Caco-2 (cell line): ENCODE measurements at regions of chr1 and their contacts with region 1.

Region 1: DNA sequence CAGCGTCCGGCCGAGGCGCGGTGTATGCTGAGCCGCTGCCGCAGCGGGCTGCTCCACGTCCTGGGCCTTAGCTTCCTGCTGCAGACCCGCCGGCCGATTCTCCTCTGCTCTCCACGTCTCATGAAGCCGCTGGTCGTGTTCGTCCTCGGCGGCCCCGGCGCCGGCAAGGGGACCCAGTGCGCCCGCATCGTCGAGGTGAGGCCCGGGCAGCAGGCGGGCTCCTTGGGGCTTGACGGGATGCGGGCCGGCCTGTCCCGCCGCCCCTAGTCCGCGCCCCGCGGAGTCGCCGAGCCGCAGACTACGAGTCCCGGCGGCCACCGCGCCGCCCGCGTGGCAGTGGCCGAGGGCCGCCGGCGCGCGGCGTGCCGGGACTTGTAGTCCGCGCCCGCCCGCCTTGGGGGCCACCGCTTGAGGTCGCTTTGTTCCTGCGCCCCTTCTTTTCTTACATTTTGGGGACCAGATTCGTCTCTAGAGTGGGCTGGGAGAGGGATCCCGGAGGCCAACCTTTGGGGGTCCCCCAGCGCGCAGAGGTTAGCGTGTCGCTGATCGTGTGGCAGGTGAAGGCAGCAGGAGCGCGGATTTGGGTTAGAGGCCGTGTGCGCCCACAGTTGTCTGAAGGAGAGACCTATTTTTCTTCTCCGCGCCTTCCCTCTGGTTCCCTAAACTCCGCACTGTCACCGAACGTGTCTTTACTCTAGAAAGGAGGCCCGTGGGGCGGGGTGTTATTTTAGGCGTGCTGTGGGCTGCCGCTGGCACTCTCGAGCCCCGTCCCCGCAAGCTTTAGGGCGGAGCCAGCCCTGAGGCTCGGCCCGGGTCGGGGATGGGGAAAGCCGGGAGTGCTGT is 553 bp downstream of the CMPK1 start:
- DNase-seq: peak; percentile 83
- H3K4me3 ChIP-seq: peak overlapping the region; percentile 85
- H3K4me3 Mint-ChIP-seq: no peak overlapping the region
- H3K27ac Mint-ChIP-seq: peak overlapping the region; percentile 93
- H3K4me1 ChIP-seq: no peaks in the 10 kb centered on the region; the same call in 1 of the 2 replicates
- H3K4me1 Mint-ChIP-seq: peaks cover 7% of the 10 kb centered on the region
- H3K27me3 ChIP-seq: no peaks in the 10 kb centered on the region
- H3K27me3 Mint-ChIP-seq: no peaks in the 10 kb centered on the region
- CTCF ChIP-seq: peak; percentile 12 to 28

Region 2: DNA sequence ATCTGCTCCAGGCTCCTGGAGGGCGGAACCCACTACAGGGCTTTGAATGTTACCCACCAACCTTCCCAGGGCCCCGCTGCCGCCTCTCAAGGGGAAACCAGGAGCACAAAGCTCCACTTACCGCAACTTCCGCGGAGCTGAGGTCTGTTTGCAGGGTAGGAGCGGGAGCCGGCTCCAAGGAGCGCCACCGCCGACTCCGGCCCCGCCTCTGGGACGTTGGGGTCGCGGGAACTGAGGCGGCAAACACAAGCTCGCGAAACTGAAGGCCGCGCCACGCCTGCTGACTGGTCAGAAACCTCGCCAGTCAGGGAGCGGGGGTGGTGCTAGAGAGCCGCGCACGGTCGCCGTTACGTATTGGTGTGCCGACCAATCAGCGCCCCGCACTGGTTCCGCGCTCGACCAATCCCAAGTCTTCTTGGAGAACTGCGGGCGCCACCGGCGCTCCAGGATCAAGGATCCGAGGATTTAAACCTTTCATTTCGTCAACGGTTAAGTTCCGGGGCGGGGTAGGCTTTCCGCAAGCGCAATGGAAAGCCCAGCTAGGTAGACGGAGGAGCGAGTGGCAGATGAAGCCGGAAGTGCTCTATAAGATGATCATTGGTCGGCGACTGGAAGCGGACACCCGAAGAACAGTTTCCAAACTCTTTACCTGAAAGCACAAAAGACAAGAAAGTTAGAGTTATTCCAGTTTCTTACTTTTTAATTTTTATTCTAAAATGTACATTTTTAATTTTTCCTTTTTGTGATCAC is 20.1 kb before region 1 on chr1 and contains the start of gene STIL:
- CTCF ChIA-PET with region 1: interaction called, 8 read pairs
- POLR2A ChIA-PET with region 1: interaction called, 53 read pairs
- intact Hi-C with region 1: loop called (anchors 1 kb)
- DNase-seq: peak; percentile 97 to 99
- H3K4me3 ChIP-seq: peak within 1 kb of the TSS; percentile 61
- H3K4me3 Mint-ChIP-seq: peak within 1 kb of the TSS; percentile 92
- H3K27ac Mint-ChIP-seq: peak within 1 kb of the TSS; percentile 99
- H3K4me1 ChIP-seq: no peaks in the 10 kb centered on the region
- H3K4me1 Mint-ChIP-seq: no peaks in the 10 kb centered on the region
- H3K27me3 ChIP-seq: no peaks in the 10 kb centered on the region
- H3K27me3 Mint-ChIP-seq: no peaks in the 10 kb centered on the region
- CTCF ChIP-seq: no peak
- total RNA-seq, gene STIL: 25.9 and 26.4 TPM in 2 replicates

Region 3: GRCh38 chr1:47378147-47378546 is 44.0 kb after region 1 on chr1:
- CTCF ChIA-PET with region 1: interaction called, 3 read pairs
- POLR2A ChIA-PET with region 1: no interaction called
- intact Hi-C with region 1: loop called (anchors 1 kb)
- DNase-seq: peak in 1 of 2 experiments; percentile 50
- H3K4me3 ChIP-seq: no peak overlapping the region
- H3K4me3 Mint-ChIP-seq: peak overlapping the region; percentile 29
- H3K27ac Mint-ChIP-seq: no peak overlapping the region
- H3K4me1 ChIP-seq: peaks cover 49% of the 10 kb centered on the region
- H3K4me1 Mint-ChIP-seq: peaks cover 10% of the 10 kb centered on the region
- H3K27me3 ChIP-seq: no peaks in the 10 kb centered on the region
- H3K27me3 Mint-ChIP-seq: no peaks in the 10 kb centered on the region
- CTCF ChIP-seq: no peak

Region 4: GRCh38 chr1:47388891-47389238 is 54.7 kb after region 1 on chr1:
- CTCF ChIA-PET with region 1: no interaction called
- POLR2A ChIA-PET with region 1: no interaction called
- intact Hi-C with region 1: no loop called
- DNase-seq: peak; percentile 67 to 74
- H3K4me3 ChIP-seq: no peak overlapping the region
- H3K4me3 Mint-ChIP-seq: peak overlapping the region; percentile 15
- H3K27ac Mint-ChIP-seq: peak overlapping the region; percentile 69
- H3K4me1 ChIP-seq: peaks cover 48% of the 10 kb centered on the region
- H3K4me1 Mint-ChIP-seq: peaks cover 52% of the 10 kb centered on the region
- H3K27me3 ChIP-seq: no peaks in the 10 kb centered on the region
- H3K27me3 Mint-ChIP-seq: no peaks in the 10 kb centered on the region
- CTCF ChIP-seq: peak; percentile 70 to 74

Region 5: DNA sequence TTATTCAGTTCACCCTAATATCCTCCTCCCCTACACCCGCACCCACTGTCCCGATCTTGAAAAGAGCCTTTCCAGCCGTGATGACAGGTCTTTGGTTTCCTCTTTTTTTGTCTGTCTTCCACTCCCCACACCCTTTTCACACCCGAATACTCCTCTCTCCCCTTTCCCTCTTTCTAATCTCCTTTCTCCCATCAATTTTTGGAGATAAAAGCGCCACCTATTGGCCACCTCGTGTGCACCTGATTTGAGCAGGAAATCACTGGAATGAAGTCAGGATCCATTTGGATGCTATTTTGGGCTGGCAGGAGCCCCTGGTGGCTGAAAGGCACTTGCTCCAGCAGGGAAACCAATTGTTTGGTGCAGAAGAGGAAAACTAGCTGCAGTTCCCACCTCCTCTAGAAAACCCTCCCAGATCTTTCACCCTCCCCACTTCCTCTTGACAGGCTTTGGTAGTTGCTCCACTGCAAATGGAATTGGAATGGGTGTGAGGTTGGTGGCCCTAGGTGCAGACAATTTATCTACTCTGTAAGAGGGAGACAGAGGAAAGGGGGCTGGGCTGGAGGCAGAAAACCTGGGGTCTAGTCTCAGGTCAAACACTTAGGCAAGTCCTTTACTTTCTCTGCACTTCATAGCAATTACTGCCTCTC is 90.3 kb after region 1 on chr1:
- CTCF ChIA-PET with region 1: interaction called, 8 read pairs
- POLR2A ChIA-PET with region 1: no interaction called
- intact Hi-C with region 1: loop called (anchors 1 kb)
- DNase-seq: peak; percentile 61 to 75
- H3K4me3 ChIP-seq: no peak overlapping the region
- H3K4me3 Mint-ChIP-seq: no peak overlapping the region
- H3K27ac Mint-ChIP-seq: no peak overlapping the region
- H3K4me1 ChIP-seq: no peaks in the 10 kb centered on the region
- H3K4me1 Mint-ChIP-seq: peaks cover 7% of the 10 kb centered on the region
- H3K27me3 ChIP-seq: no peaks in the 10 kb centered on the region
- H3K27me3 Mint-ChIP-seq: no peaks in the 10 kb centered on the region
- CTCF ChIP-seq: peak; percentile 80 to 83

Region 6: GRCh38 chr1:47459253-47459788 is 125.2 kb after region 1 on chr1:
- CTCF ChIA-PET with region 1: no interaction called
- POLR2A ChIA-PET with region 1: no interaction called
- intact Hi-C with region 1: no loop called
- DNase-seq: no peak
- H3K4me3 ChIP-seq: no peak overlapping the region
- H3K4me3 Mint-ChIP-seq: no peak overlapping the region
- H3K27ac Mint-ChIP-seq: no peak overlapping the region
- H3K4me1 ChIP-seq: no peaks in the 10 kb centered on the region
- H3K4me1 Mint-ChIP-seq: peaks cover 21% of the 10 kb centered on the region
- H3K27me3 ChIP-seq: no peaks in the 10 kb centered on the region
- H3K27me3 Mint-ChIP-seq: no peaks in the 10 kb centered on the region
- CTCF ChIP-seq: no peak